ENCODE measurements at regions of chr9 and their contacts with region 1.

Region 1: DNA sequence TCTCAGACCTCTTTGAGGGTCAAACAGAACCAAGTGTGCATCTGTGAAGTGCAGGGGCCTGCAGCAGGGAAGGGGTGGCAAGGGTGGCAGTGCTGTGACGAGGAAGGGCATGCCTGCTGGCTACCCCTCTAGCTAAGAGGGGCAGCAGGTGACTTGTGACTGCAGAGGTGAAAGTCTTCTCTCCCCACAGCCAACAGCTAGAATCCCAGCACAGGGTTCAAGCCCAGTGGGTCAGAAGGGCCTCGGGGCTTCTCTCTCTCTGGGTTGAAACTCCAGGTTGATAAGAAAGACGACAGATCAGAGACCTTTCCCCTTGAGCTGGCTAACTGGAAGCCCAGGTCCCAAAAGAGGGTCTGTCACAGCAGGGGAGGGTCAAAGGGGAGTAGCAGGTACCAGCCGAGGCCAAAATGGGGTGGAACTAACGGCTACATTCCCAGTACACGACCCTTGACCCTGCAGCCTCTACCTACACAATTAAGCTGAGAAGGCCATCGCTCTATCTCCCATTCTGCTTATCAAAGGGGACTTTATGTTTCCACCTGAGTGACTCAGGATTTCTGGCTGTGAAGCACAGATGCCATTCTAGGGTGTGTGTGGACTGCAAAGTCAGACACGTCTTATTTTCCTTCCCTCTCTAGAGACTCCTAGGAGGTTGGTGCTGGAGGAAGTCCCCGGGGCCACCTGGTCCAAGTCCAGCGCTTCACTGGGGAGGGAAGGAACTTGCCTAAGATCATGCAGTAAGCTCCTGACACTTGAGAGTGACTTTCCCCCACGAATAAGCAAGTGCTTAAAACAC is 14.6 kb downstream of the ANKS6 start:
- DNase-seq: no peak
- ATAC-seq: no peak

Region 2: DNA sequence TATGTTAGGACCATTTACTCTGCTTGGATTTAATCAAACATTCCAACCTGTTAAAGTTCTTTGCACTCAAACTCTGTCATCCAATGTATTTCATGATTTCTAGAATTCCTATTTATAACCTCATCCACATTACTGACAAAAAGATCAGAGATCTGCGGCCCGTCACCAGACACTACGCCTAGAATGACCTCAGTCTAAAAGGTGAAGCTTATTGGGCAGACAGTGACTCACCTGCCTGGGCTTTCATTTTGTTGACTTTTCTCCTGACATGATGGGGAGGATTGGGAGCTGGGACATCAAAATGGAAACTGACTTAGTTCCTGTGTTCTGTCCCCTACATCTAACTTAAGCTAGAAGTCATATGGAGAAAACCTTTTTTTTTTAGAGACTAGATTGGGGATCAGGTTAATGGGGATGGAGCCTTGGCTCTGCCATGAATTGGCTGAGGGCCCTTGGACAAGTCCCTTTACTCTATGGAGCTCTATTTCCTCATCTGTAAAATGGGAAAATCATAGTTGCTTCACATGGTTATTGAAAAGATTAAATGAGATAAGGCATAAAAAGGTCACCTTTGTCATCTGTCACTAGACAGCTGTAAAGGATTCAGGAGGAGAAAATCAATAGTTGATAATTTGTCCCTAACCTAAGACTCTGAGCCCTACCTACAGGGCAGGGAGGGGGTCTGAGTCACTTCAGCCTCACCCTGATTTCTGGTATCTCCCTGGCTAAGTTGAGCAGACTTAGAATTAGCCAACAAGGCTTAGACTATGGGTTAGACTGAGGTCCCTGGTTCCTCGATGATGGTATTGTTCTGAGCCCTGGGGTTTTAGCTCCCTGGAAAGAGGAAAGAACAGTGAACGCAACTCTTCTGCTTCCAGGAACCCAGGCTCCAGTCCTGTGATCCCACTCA is 301.6 kb before region 1 on chr9:
- intact Hi-C with region 1: loop called (anchors 10 kb)
- DNase-seq: no peak
- ATAC-seq: no peak

Region 3: GRCh38 chr9:98593354-98594253 is 188.2 kb before region 1 on chr9:
- intact Hi-C with region 1: no loop called
- DNase-seq: no peak
- ATAC-seq: no peak

Region 4: GRCh38 chr9:98614941-98615340 is 166.8 kb before region 1 on chr9:
- intact Hi-C with region 1: no loop called
- DNase-seq: no peak
- ATAC-seq: no peak

Region 5: DNA sequence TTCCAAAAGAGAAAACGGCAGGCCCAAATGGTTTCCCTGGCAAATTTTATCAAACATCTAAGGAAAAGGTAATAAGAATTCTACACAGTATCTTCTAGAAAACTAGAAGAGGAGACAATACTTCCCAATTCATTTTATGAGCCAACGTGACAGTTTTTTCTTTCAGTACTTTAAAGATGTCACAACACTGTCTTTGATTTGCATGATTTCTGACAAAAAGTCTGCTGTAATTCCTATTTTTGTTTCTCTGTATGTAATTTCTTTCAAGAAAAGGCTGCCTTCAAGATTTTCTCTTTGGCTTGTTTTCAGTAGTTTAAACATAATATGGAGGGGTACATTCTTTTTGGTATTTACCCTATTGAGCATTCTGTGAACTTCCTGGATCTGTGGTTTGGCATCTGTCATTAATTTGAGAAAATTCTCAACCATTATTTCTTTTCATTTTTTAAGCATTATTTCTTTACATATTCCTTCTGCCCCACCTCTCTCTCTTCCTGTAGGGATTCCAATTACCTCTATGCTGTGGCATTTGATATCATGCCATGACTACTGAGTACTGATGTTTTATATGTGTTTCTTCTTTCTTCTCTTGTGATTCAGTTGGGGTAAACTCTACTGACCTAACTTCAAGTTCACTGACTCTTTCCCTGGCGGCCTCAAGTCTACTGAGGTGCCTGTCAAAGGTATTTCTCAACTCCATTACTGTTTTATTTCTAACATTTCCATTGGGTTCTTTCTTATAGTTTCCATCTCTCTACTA is 17.6 kb before region 1 on chr9:
- intact Hi-C with region 1: no loop called
- DNase-seq: no peak
- ATAC-seq: no peak